A549 (cell line): ENCODE measurements at regions of chr15 and their contacts with region 1.

Region 1: GRCh38 chr15:85475317-85475701 is 94.9 kb downstream of the AKAP13 start:
- DNase-seq: no peak
- ATAC-seq: no peak
- H3K4me3 ChIP-seq: no peak overlapping the region
- H3K27ac ChIP-seq: no peak overlapping the region
- H3K4me1 ChIP-seq: peaks cover 67% of the 10 kb centered on the region
- CTCF ChIP-seq: no peak
- EP300 ChIP-seq: no peak
- POLR2A ChIP-seq: no peak
- RAD21 ChIP-seq: no peak

Region 2: GRCh38 chr15:85485956-85486567 is 10.8 kb after region 1 on chr15:
- CTCF ChIA-PET with region 1: interaction called, 30 read pairs
- POLR2A ChIA-PET with region 1: no interaction called
- DNase-seq: peak; percentile 72 to 84
- ATAC-seq: peak; percentile 91 to 95
- H3K4me3 ChIP-seq: no peak overlapping the region
- H3K27ac ChIP-seq: no peak overlapping the region
- H3K4me1 ChIP-seq: peaks cover 20% of the 10 kb centered on the region; the same call in 2 of the 3 replicates
- CTCF ChIP-seq: peak; percentile 90
- EP300 ChIP-seq: no peak
- POLR2A ChIP-seq: no peak
- RAD21 ChIP-seq: peak; percentile 89 to 92